A549 (cell line): ENCODE measurements at regions of chr12 and their contacts with region 1.

Region 1: DNA sequence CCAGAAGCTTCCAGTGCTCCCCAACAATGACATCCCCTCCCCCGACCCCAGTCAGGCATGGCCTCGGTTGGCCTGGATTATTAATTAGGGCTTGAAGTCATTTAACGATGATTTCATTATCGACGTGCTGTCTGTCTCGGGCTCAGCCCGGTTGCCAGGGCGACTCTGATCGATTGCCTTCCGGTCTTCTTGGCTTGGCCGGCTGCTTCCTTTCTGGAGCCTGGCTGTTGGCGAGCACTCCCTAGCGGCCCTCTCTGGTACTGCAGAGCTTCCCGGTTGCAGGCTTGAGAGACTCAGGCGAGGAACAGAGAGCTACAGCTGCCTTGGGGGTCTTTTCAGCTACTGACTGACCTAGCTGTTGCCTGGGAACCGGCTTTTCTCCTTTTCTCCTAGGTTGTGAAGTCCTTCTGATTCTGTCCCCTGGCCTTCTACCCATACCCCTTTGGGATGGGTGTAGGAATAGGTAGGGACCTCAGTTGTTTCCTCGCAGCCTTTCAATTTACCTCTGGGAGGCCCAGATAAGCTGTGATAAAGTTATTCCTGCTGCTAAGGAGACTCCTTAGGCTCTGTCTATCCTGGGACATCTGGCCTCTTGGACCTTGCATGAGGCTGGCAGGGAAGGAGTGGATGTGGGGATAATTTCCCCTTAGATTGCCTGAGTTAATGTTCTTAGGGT is 5.5 kb upstream of the CISTR start:
- DNase-seq: peak; percentile 78 to 86
- ATAC-seq: peak; percentile 59 to 84; a peak in 5 of 6 replicates
- H3K4me3 ChIP-seq: peak overlapping the region; percentile 30; the same call in 2 of the 3 replicates
- H3K27ac ChIP-seq: peak overlapping the region; percentile 53 to 73; a peak in 5 of 6 replicates
- H3K4me1 ChIP-seq: peaks cover 11% of the 10 kb centered on the region; the same call in 1 of the 3 replicates
- CTCF ChIP-seq: peak; percentile 65
- EP300 ChIP-seq: no peak
- POLR2A ChIP-seq: no peak
- RAD21 ChIP-seq: peak; percentile 24 to 60; a peak in 3 of 5 replicates

Region 2: DNA sequence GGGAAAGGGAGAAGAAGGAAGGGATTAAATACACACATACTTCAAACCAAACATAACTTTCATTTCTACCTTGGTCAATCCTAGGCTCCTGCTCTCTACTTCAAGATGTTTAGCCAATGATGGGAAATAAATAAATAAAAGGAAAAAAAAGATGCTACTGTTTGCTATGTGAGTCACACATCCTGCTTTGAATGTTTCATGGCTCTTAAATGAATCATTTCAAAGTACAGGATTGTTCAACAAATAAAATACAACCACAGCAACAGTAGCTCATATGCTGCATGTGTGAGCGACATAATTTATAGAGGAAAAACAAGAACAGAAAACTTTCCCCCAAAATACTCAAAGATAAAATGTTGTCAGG is 195.7 kb before region 1 on chr12:
- CTCF ChIA-PET with region 1: no interaction called
- POLR2A ChIA-PET with region 1: interaction called, 10 read pairs
- DNase-seq: peak; percentile 75 to 88
- ATAC-seq: peak; percentile 90 to 95
- H3K4me3 ChIP-seq: 0 out of 3 replicates have a peak overlapping the region, but pooled peaks have one; percentile 7
- H3K27ac ChIP-seq: peak overlapping the region; percentile 71 to 87
- H3K4me1 ChIP-seq: peaks cover 66% of the 10 kb centered on the region
- CTCF ChIP-seq: no peak
- EP300 ChIP-seq: no peak
- POLR2A ChIP-seq: no peak
- RAD21 ChIP-seq: 0 out of 5 replicates have a peak, but pooled peaks of 1 of the 2 experiments have one; percentile 4

Region 3: DNA sequence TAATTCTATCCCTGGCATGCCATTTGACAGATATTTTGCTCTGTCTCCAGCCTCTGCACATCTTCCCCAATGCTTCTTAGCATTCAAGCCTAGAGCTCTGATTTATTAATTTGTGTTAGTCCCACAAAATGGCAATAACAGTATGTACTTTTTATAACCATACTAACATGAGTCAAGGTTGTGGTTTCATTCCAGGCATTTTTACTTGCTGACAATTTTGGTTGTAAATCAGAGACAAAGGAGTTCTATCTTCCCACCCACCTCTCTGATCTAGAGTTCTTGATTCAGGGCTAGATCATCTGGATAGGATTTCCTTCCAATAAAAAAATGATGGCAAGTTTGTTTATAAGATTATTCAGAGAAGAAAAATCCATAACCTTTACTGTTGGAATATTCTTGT is 13.0 kb after region 1 on chr12:
- CTCF ChIA-PET with region 1: interaction called, 28 read pairs
- POLR2A ChIA-PET with region 1: no interaction called
- DNase-seq: peak; percentile 21 to 66
- ATAC-seq: peak in 1 of 2 experiments; percentile 68; a peak in 3 of 6 replicates
- H3K4me3 ChIP-seq: no peak overlapping the region
- H3K27ac ChIP-seq: peak overlapping the region; percentile 43 to 56; a peak in 4 of 6 replicates
- H3K4me1 ChIP-seq: peaks cover 21% of the 10 kb centered on the region
- CTCF ChIP-seq: no peak
- EP300 ChIP-seq: no peak
- POLR2A ChIP-seq: no peak
- RAD21 ChIP-seq: peak in 1 of 2 experiments; percentile 17; a peak in 2 of 5 replicates

Region 4: DNA sequence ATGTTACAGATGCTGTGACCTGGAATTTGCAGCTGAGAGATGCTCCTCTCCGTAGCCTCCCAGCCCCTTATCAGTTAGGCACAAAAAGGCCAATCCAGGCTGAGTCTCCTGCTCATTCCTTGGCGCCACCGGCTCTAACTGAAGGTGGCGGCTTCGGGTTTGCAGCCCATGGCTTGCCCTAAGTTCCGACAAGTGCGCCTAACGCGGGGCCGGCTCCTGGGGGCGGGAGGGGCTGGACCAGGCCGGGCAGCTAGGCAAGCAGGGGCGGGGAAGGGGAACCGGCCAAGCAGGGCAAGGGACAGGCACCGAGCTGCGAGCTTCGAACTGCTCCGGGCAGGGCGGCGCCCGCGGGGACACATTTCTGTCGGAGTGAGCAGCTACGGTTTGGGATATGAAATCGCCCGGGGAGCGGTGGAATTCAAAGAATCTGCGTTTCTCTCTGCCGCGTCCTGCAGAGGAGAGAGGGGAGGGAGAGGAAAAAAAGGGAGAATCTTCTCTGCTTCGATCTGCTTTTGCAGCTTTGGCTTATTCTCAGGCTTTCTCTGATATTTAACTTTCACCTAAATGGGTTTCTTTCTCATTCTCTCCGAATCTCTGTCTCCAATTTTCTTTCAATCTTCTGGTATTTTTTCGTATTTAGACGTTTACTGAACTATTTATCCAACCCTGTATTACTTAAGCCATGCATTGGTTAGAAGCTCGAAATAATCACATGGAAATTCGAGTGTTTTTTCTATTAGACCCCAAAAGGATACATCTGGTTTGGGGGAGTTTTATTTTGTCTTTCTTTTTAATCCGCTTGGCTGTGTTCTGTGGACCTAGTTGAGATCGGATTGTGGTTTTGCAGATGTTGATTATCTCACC is 195.9 kb after region 1 on chr12:
- CTCF ChIA-PET with region 1: interaction called, 11 read pairs
- POLR2A ChIA-PET with region 1: no interaction called
- DNase-seq: peak; percentile 22 to 47
- ATAC-seq: peak; percentile 10 to 60; a peak in 4 of 6 replicates
- H3K4me3 ChIP-seq: no peak overlapping the region
- H3K27ac ChIP-seq: peak overlapping the region; percentile 17 to 72; a peak in 4 of 6 replicates
- H3K4me1 ChIP-seq: peaks cover 14% of the 10 kb centered on the region
- CTCF ChIP-seq: no peak
- EP300 ChIP-seq: no peak
- POLR2A ChIP-seq: no peak
- RAD21 ChIP-seq: no peak